CD8-positive, alpha-beta memory T cell (primary cell): ENCODE measurements at regions of chr1 and their contacts with region 1.

Region 1: DNA sequence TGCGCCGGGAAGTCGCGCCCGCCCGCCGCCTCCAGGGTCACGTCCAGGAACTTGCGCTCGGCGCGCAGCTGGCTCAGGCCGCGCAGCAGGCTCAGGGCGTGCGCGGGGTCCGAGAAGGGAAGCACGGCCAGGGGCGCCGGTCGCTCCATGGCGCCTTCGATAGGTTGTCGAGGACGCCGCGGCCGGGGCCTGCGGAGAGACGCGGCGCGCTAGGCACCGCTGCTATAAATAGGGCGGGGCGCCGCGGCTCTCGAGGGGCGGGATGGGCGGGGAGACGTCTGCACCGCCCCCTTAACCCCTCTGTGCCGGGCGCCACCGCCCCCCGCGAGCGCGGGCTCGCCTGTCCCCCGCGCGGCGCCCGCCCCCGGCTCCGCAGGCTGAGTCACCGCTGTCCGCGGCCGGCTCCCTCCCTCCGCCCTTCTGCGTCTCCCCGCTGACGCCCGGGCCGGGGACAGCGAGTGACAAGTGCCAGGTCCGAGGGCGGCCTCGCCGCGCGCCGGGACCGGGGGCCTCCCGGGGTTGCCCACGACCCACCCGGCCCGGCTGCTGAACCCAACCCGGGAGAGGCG is at the start of gene KLHL21:
- DNase-seq: peak; percentile 80 to 90 (median 82)
- H3K4me3 ChIP-seq: peak within 1 kb of the TSS; percentile 81
- H3K4me3 Mint-ChIP-seq: peak within 1 kb of the TSS; percentile 92 to 99 (median 98)
- H3K27ac ChIP-seq: peak within 1 kb of the TSS; percentile 94
- H3K27ac Mint-ChIP-seq: peak within 1 kb of the TSS; percentile 91 to 99 (median 96)
- H3K4me1 ChIP-seq: peaks cover 36% of the 10 kb centered on the region
- H3K4me1 Mint-ChIP-seq: peaks cover 31 to 44% (median 33%) of the 10 kb centered on the region in 3 donors
- H3K27me3 ChIP-seq: no peaks in the 10 kb centered on the region
- H3K27me3 Mint-ChIP-seq: no peaks in the 10 kb centered on the region
- total RNA-seq, gene KLHL21: 36.4 to 37.3 TPM

Region 2: GRCh38 chr1:6464514-6464836 is 138.3 kb before region 1 on chr1:
- CTCF ChIA-PET with region 1: no interaction called
- POLR2A ChIA-PET with region 1: interaction called, 12 read pairs
- DNase-seq: no peak
- H3K4me3 ChIP-seq: peak overlapping the region; percentile 81
- H3K4me3 Mint-ChIP-seq: peak overlapping the region; percentile 88 to 98 (median 91)
- H3K27ac ChIP-seq: no peak overlapping the region
- H3K27ac Mint-ChIP-seq: peak overlapping the region; percentile 81 to 98 (median 94)
- H3K4me1 ChIP-seq: peaks cover 57% of the 10 kb centered on the region
- H3K4me1 Mint-ChIP-seq: peaks cover 35 to 61% (median 42%) of the 10 kb centered on the region in 3 donors
- H3K27me3 ChIP-seq: no peaks in the 10 kb centered on the region
- H3K27me3 Mint-ChIP-seq: no peaks in the 10 kb centered on the region

Region 3: GRCh38 chr1:6579374-6580118 is 23.2 kb before region 1 on chr1 and contains the start of gene ZBTB48:
- CTCF ChIA-PET with region 1: interaction called, 28 read pairs
- POLR2A ChIA-PET with region 1: interaction called, 64 read pairs
- DNase-seq: peak; percentile 95 to 98 (median 96)
- H3K4me3 ChIP-seq: peak within 1 kb of the TSS; percentile 85
- H3K4me3 Mint-ChIP-seq: peak within 1 kb of the TSS; percentile 89 to 99 (median 96)
- H3K27ac ChIP-seq: peak within 1 kb of the TSS; percentile 88
- H3K27ac Mint-ChIP-seq: peak within 1 kb of the TSS; percentile 87 to 98 (median 98)
- H3K4me1 ChIP-seq: peaks cover 30% of the 10 kb centered on the region
- H3K4me1 Mint-ChIP-seq: peaks cover 33 to 43% (median 36%) of the 10 kb centered on the region in 3 donors
- H3K27me3 ChIP-seq: no peaks in the 10 kb centered on the region
- H3K27me3 Mint-ChIP-seq: no peaks in the 10 kb centered on the region
- total RNA-seq, gene ZBTB48: 25.0 to 31.7 TPM

Region 4: DNA sequence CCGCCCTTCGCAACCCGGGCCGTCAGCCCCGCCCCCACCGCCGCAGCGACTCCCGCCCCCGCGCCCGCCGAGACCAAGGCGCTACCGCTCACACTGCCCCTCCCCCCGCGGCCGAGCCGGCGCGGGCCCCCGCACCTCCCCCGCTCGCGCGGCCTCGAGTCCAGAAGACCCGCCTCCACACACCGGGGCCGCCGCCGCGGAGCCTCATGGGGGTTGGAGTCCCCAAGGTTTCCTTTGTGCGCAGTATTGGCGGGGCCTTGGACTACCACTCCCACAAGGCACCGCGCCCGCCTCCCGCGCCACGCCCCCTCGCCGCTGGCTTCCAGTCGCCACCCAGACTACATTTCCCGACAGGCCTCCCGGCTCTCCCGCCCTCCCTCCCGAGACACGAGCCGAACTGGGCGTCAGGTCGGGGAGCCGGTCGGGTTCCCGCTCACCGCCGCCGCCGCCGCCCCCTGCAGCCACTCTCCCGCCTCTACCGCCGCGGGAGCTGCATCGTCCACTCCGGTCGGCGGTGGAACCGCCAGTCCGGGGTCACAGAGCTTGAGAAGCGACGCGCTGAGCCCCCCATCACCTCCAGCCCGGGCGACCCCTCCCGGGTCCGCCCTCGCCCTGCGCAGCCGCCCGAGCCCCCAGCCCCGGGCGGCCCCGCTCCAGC is 10.7 kb after region 1 on chr1 and contains the start of gene PHF13:
- CTCF ChIA-PET with region 1: interaction called, 6 read pairs
- POLR2A ChIA-PET with region 1: interaction called, 32 read pairs
- DNase-seq: peak; percentile 99
- H3K4me3 ChIP-seq: peak within 1 kb of the TSS; percentile 93
- H3K4me3 Mint-ChIP-seq: peak within 1 kb of the TSS; percentile 90 to 96 (median 92)
- H3K27ac ChIP-seq: peak within 1 kb of the TSS; percentile 81
- H3K27ac Mint-ChIP-seq: peak within 1 kb of the TSS; percentile 65 to 95 (median 92)
- H3K4me1 ChIP-seq: peaks cover 12% of the 10 kb centered on the region
- H3K4me1 Mint-ChIP-seq: peaks cover 20 to 25% (median 23%) of the 10 kb centered on the region in 3 donors
- H3K27me3 ChIP-seq: no peaks in the 10 kb centered on the region
- H3K27me3 Mint-ChIP-seq: peaks cover 0 to 2% of the 10 kb centered on the region in 2 donors
- total RNA-seq, gene PHF13: 12.5 to 14.0 TPM

Region 5: DNA sequence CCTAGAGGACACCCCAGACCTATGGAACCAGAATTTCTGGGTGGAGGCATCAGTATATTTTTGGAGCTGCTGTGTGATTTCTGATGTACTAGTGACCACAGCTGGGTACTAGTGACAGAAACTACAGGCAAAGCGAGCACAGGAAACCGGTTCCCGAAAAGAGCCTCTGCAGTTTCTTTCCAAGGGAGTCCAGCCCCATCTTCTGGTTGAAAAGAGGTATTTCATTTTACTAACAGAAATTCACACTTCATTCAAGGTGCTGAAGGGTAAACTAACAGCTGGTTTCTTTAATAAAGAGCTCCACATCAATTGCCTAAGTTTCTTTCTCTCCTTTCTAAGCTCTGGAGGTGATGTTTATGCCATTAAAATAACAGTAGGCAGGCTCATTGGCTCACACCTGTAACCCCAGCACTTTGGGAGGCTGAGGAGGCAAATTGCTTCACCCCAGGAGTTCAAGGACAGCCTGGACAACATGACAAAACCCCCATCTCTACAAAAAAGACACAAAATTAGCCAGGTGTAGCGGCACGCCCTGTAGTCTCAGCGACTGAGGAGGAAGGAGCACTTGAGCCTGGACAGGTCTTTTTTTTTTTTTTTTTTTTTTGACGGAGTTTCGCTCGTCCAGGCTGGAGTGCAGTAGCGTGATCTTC is 43.9 kb after region 1 on chr1:
- CTCF ChIA-PET with region 1: interaction called, 16 read pairs
- POLR2A ChIA-PET with region 1: no interaction called
- DNase-seq: peak in 2 of 5 donors; percentile 30 to 49
- H3K4me3 ChIP-seq: no peak overlapping the region
- H3K4me3 Mint-ChIP-seq: no peak overlapping the region
- H3K27ac ChIP-seq: no peak overlapping the region
- H3K27ac Mint-ChIP-seq: peak overlapping the region in 1 of 8 donors; percentile 29
- H3K4me1 ChIP-seq: no peaks in the 10 kb centered on the region
- H3K4me1 Mint-ChIP-seq: no peaks in the 10 kb centered on the region
- H3K27me3 ChIP-seq: no peaks in the 10 kb centered on the region
- H3K27me3 Mint-ChIP-seq: no peaks in the 10 kb centered on the region